A673 (cell line): ENCODE measurements at regions of chr9 and their contacts with region 1.

Region 1: GRCh38 chr9:72726947-72727346 is 205.5 kb downstream of the TMC1 start:
- DNase-seq: no peak
- H3K4me3 ChIP-seq: no peak overlapping the region
- H3K27ac ChIP-seq: no peak overlapping the region
- H3K4me1 ChIP-seq: no peaks in the 10 kb centered on the region
- H3K27me3 ChIP-seq: no peaks in the 10 kb centered on the region
- CTCF ChIP-seq: no peak

Region 2: DNA sequence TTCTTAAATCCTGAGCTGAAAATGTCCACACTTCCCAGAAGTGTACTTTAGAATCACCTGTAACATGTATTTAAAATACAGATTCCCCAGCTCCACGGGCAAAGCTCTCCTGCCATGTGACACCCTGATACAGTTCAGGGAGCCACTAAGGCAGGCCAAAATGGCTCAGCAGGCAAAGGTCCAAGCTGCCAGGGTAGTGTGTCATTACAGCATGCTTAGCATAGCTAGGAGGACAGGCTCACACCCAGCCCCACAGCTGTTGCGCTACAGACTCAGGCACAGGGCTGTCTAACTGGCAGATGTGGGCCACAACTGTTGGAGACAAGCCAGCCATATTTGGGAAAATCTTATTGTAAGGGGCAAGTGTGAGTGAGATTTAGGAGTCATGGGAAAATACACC is 742.5 kb before region 1 on chr9:
- CTCF ChIA-PET with region 1: no interaction called
- POLR2A ChIA-PET with region 1: no interaction called
- intact Hi-C with region 1: no loop called
- DNase-seq: no peak
- H3K4me3 ChIP-seq: no peak overlapping the region
- H3K27ac ChIP-seq: no peak overlapping the region
- H3K4me1 ChIP-seq: no peaks in the 10 kb centered on the region
- H3K27me3 ChIP-seq: no peaks in the 10 kb centered on the region
- CTCF ChIP-seq: no peak

Region 3: GRCh38 chr9:72149231-72149975 is 577.5 kb before region 1 on chr9 and contains the start of gene GDA:
- CTCF ChIA-PET with region 1: no interaction called
- POLR2A ChIA-PET with region 1: no interaction called
- intact Hi-C with region 1: no loop called
- DNase-seq: no peak
- H3K4me3 ChIP-seq: no peak within 1 kb of the TSS
- H3K27ac ChIP-seq: no peak within 1 kb of the TSS
- H3K4me1 ChIP-seq: no peaks in the 10 kb centered on the region
- H3K27me3 ChIP-seq: peaks cover 38% of the 10 kb centered on the region
- CTCF ChIP-seq: no peak
- total RNA-seq, gene GDA: not detected in 2 replicates

Region 4: DNA sequence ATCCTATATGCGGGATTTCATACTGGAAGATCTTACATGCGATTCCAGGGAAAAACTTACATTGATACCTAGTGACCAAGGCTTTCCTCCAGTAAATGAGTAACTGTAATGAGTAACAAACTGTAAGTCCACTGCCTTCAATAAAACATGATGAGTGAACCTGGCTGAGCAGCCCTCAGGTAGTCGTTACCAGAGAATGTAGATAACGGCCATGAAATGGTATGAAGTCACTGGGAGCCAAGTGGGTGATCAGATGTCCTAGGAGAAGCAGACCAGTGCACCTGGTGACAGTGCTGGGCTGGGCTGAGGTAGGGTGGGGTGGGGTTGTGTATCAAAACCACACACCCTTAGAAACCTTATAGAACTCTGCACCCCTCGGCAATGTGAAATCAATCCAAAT is 22.3 kb after region 1 on chr9:
- CTCF ChIA-PET with region 1: no interaction called
- POLR2A ChIA-PET with region 1: no interaction called
- intact Hi-C with region 1: no loop called
- DNase-seq: no peak
- H3K4me3 ChIP-seq: no peak overlapping the region
- H3K27ac ChIP-seq: no peak overlapping the region
- H3K4me1 ChIP-seq: no peaks in the 10 kb centered on the region
- H3K27me3 ChIP-seq: no peaks in the 10 kb centered on the region
- CTCF ChIP-seq: no peak

Region 5: GRCh38 chr9:72773570-72773969 is 46.6 kb after region 1 on chr9:
- CTCF ChIA-PET with region 1: no interaction called
- POLR2A ChIA-PET with region 1: no interaction called
- intact Hi-C with region 1: loop called (anchors 10 kb)
- DNase-seq: no peak
- H3K4me3 ChIP-seq: no peak overlapping the region
- H3K27ac ChIP-seq: no peak overlapping the region
- H3K4me1 ChIP-seq: no peaks in the 10 kb centered on the region
- H3K27me3 ChIP-seq: no peaks in the 10 kb centered on the region
- CTCF ChIP-seq: no peak

Region 6: GRCh38 chr9:72834994-72835393 is 108.0 kb after region 1 on chr9:
- CTCF ChIA-PET with region 1: no interaction called
- POLR2A ChIA-PET with region 1: no interaction called
- intact Hi-C with region 1: no loop called
- DNase-seq: no peak
- H3K4me3 ChIP-seq: no peak overlapping the region
- H3K27ac ChIP-seq: no peak overlapping the region
- H3K4me1 ChIP-seq: no peaks in the 10 kb centered on the region
- H3K27me3 ChIP-seq: no peaks in the 10 kb centered on the region
- CTCF ChIP-seq: no peak